Activated T-helper 1 cell treated with anti-CD3 and anti-CD28 coated beads, Interleukin-12 subunit alpha, Interleukin-12 subunit beta, Interleukin-2, Interleukin-4 antibody, amounts not matched to agents 30 ng/mL and 10 ng/mL and 1 ng/mL, durations not matched to agents 14 hours and 24 hours and 36 hours (primary cell): ENCODE measurements at regions of chr3 and their contacts with region 1.

Region 1: DNA sequence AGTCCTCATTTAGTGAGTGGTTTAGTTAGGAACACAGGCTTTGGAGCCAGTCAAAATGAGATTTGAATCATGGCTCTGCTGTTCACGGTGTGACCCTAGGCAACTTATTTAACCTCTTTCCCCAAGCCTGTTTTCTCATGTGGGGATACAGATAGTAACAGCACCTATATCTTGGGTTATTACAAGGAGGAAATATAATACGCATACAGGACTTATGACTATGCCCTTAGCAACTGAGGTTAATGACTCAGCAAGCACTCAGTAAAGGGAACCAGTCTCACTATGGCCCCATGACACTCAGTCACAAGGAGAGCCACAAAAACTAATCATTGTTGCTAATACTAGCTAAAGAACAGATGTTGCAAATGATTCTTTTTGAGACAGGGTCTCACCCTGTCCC is 45.9 kb downstream of the SUMF1 start:
- DNase-seq: no peak
- H3K4me3 Mint-ChIP-seq: peak overlapping the region; percentile 25
- H3K27ac Mint-ChIP-seq: peak overlapping the region; percentile 57
- H3K4me1 Mint-ChIP-seq: peaks cover 25% of the 10 kb centered on the region
- H3K27me3 Mint-ChIP-seq: no peaks in the 10 kb centered on the region

Region 2: GRCh38 chr3:4466741-4467521 is 45.8 kb after region 1 on chr3 and contains the start of gene SUMF1:
- intact Hi-C with region 1: loop called (anchors 1 kb)
- DNase-seq: peak; percentile 68
- H3K4me3 Mint-ChIP-seq: peak within 1 kb of the TSS; percentile 95
- H3K27ac Mint-ChIP-seq: peak within 1 kb of the TSS; percentile 91
- H3K4me1 Mint-ChIP-seq: peaks cover 15% of the 10 kb centered on the region
- H3K27me3 Mint-ChIP-seq: peaks cover 2% of the 10 kb centered on the region
- total RNA-seq, gene SUMF1: 6.1 and 7.0 TPM in 2 replicates

Region 3: GRCh38 chr3:4834403-4834866 is 413.3 kb after region 1 on chr3:
- intact Hi-C with region 1: no loop called
- DNase-seq: peak; percentile 80
- H3K4me3 Mint-ChIP-seq: peak overlapping the region; percentile 79
- H3K27ac Mint-ChIP-seq: peak overlapping the region; percentile 98
- H3K4me1 Mint-ChIP-seq: peaks cover 86% of the 10 kb centered on the region
- H3K27me3 Mint-ChIP-seq: no peaks in the 10 kb centered on the region